CD8-positive, alpha-beta T cell (primary cell): ENCODE measurements at regions of chr14 and their contacts with region 1.

Region 1: DNA sequence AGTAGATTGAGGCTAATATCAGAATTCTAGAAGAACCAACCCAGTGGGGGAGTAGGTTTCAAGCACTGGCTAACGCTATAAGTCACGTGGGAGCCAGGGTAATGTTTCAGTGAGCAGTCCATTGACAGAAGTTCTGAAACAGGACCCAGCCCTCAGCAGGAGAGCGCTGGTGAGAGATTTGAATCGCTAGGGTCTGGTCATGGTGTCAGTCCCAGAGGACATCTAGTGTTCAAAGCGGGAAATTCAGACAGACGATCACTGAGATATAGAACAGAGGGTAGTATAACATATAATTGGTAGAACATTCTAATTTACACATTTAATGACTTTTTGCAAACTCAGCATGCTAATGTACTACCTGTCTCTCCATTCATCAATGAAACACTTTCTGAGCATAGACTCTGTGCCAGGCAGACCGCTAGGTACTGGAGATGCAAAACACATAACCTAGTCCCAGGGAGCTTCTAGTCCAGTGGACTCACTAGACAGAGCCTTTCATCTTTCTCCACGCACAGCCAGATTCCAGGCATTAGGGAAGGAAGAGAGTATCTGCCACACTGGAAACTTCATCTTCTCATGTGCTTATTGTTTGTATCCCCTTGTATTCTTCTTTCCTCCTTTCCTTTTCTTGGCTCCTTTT is 35.4 kb upstream of the RNASE3 start:
- DNase-seq: peak in 6 of 9 experiments; percentile 13 to 70 (median 28)
- ATAC-seq: peak; percentile 79
- H3K4me3 ChIP-seq: no peak overlapping the region
- H3K4me3 Mint-ChIP-seq: no peak overlapping the region
- H3K27ac ChIP-seq: no peak overlapping the region
- H3K27ac Mint-ChIP-seq: no peak overlapping the region
- H3K4me1 ChIP-seq: no peaks in the 10 kb centered on the region
- H3K4me1 Mint-ChIP-seq: peaks cover 5% of the 10 kb centered on the region
- H3K27me3 ChIP-seq: no peaks in the 10 kb centered on the region
- H3K27me3 Mint-ChIP-seq: peaks cover 22% of the 10 kb centered on the region
- CTCF ChIP-seq: peak; percentile 50

Region 2: DNA sequence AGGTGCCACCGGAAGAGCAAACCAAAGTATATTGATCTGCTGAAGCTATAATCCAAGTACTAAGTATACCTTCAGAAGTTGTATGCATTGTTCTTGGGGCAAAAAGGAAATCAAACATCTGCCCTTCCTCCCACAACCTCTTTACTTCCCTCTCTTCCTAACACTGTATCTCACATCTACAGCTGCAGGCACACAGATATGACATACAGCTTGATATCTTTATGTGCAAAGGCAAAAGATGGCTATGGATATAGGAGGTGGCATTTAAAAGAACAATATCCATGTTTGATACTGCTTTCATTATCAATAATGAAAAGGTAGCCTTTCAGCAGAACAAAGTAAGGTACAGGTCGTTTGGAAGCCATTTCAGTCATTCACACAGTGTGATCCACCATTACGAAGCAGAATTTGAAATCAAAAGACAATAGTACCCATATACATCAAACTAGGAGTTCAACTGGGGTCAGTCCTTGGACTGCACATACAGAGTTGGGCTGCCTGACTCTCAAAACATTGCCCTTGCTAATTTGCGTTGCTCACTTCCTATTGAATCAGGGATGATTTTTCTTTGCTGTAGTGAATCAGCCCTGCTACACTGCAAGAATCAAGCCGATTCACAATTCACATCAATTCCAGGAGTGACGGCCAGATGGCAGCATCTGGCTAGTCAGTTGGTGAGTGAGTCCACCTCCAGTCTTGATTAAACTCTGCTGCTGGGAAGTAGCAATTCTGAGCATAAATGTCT is 158.3 kb before region 1 on chr14:
- CTCF ChIA-PET with region 1: interaction called, 30 read pairs
- POLR2A ChIA-PET with region 1: no interaction called
- intact Hi-C with region 1: loop called in 1 of 2 experiments (anchors 1 kb)
- DNase-seq: peak; percentile 44 to 76 (median 60)
- ATAC-seq: peak; percentile 72
- H3K4me3 ChIP-seq: no peak overlapping the region
- H3K4me3 Mint-ChIP-seq: no peak overlapping the region
- H3K27ac ChIP-seq: no peak overlapping the region
- H3K27ac Mint-ChIP-seq: no peak overlapping the region
- H3K4me1 ChIP-seq: no peaks in the 10 kb centered on the region
- H3K4me1 Mint-ChIP-seq: no peaks in the 10 kb centered on the region
- H3K27me3 ChIP-seq: no peaks in the 10 kb centered on the region
- H3K27me3 Mint-ChIP-seq: no peaks in the 10 kb centered on the region
- CTCF ChIP-seq: peak; percentile 75

Region 3: DNA sequence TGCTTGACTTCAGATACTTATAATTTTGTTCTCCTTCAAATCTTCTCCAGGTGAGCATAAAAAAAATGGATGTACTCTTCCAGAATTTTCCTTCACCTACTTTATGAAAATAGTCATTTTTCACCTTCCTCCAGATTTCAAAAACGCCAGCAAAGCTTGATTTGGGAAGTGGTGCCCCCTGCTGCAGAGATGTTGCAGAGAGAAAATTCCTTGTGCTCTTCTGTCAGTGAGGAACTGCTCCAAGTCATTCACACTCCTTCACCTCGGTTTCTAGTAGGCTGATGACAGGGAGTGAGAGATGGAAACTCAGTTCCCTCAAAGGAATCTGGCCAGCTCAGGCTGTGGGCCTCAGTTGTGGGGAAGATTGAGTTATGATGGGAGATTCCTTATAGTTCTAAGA is 11.2 kb after region 1 on chr14:
- CTCF ChIA-PET with region 1: interaction called, 28 read pairs
- POLR2A ChIA-PET with region 1: no interaction called
- intact Hi-C with region 1: no loop called
- DNase-seq: peak in 2 of 9 experiments; percentile 5 to 20
- ATAC-seq: no peak
- H3K4me3 ChIP-seq: no peak overlapping the region
- H3K4me3 Mint-ChIP-seq: no peak overlapping the region
- H3K27ac ChIP-seq: no peak overlapping the region
- H3K27ac Mint-ChIP-seq: no peak overlapping the region
- H3K4me1 ChIP-seq: no peaks in the 10 kb centered on the region
- H3K4me1 Mint-ChIP-seq: no peaks in the 10 kb centered on the region
- H3K27me3 ChIP-seq: no peaks in the 10 kb centered on the region
- H3K27me3 Mint-ChIP-seq: peaks cover 12% of the 10 kb centered on the region
- CTCF ChIP-seq: no peak

Region 4: DNA sequence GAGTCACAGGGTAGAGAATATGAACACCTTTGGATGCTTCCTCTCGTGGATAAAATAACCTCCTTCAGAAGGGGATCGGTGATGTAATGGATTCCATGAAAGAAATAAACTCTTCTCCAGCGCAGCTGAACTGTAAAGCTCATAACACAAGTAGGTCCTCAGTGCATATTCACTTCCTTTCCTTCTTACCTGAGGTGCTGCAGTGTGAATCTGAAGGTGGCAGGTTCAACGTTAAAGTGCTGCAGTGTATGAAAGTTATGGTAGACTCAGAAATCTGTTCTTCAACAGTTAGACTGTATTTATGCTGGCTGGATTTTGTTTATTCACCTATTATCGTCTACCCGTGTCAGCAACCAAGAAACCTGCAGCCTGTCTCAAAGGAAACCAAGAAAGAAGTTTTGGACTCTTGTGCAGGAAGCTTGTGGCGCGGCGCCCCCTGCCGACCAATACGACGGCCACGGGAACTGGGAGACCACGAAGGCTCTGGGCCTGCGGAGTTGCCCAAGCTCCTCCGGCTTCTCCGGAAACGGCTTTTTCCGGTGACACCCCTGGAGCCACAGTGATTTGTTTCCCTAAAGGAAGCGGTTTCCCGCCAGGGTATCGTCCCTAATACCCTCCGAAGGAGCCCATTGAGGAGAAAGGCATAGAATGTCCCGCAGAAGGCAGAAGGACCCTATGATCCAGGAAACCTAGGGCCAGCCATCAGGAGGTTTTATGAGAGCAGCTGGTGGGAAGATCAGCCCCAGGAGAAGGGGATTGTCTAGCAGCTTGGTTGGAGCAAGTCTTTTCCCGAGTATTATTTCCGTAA is 17.8 kb after region 1 on chr14:
- CTCF ChIA-PET with region 1: interaction called, 28 read pairs
- POLR2A ChIA-PET with region 1: interaction called, 3 read pairs
- intact Hi-C with region 1: loop called in 1 of 2 experiments (anchors 1 kb)
- DNase-seq: peak; percentile 47 to 86 (median 76)
- ATAC-seq: peak; percentile 74
- H3K4me3 ChIP-seq: no peak overlapping the region
- H3K4me3 Mint-ChIP-seq: no peak overlapping the region
- H3K27ac ChIP-seq: no peak overlapping the region
- H3K27ac Mint-ChIP-seq: no peak overlapping the region
- H3K4me1 ChIP-seq: peaks cover 10% of the 10 kb centered on the region
- H3K4me1 Mint-ChIP-seq: peaks cover 13% of the 10 kb centered on the region
- H3K27me3 ChIP-seq: no peaks in the 10 kb centered on the region
- H3K27me3 Mint-ChIP-seq: peaks cover 12% of the 10 kb centered on the region
- CTCF ChIP-seq: peak; percentile 82